K562 (cell line): ENCODE measurements at regions of chr19 and their contacts with region 1.

Region 1: DNA sequence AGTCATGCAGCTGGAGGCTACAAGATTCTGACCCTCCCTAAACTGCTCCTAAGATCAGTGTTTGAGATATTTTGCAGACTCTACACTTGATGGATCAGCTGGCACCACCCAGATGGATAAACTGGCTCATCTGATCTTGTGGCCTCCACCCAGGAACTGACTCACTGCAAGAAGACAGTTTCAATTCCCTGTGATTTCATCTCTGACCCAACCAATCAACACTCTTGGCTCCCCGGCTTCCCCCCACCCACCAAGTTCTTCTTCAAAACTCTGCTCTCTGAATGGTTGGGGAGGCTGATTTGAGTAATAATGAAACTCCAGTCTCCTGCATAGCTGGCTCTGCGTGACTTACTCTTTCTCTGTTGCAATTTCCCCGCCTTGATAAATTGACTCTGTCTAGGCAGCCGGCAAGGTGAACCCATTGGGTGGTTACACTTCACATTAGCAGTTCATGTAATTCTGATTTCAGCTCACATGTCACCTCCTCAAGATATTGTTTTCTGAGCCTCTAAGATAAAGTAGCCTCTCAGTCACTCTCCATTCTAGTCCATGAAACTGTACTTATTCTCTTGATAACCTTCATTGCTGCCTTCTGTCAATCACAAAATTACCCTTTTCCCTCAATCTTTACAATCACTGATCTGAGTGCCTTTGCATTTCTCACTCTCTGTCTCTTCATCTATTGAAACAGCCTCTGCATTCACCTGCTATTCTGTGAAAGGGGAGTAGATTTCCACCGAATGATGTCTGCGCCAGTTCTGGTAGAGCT is 9.9 kb upstream of the FPR3 start:
- DNase-seq: peak in 2 of 4 experiments; percentile 51 to 75
- ATAC-seq: peak; percentile 81
- H3K4me3 ChIP-seq: no peak overlapping the region
- H3K27ac ChIP-seq: peak overlapping the region; percentile 63; the same call in 2 of the 3 replicates
- H3K4me1 ChIP-seq: peaks cover 17 to 42% of the 10 kb centered on the region in 2 experiments
- H3K27me3 ChIP-seq: no peaks in the 10 kb centered on the region
- CTCF ChIP-seq: no peak
- EP300 ChIP-seq: peak; percentile 77
- POLR2A ChIP-seq: no peak
- RAD21 ChIP-seq: no peak

Region 2: GRCh38 chr19:51422053-51422448 is 363.1 kb before region 1 on chr19:
- CTCF ChIA-PET with region 1: no interaction called
- POLR2A ChIA-PET with region 1: no interaction called
- in situ Hi-C with region 1: loop called (anchors 10 kb)
- intact Hi-C with region 1: loop called (anchors 10 kb)
- DNase-seq: peak; percentile 90 to 95 (median 94)
- ATAC-seq: peak; percentile 95
- H3K4me3 ChIP-seq: no peak overlapping the region
- H3K27ac ChIP-seq: no peak overlapping the region
- H3K4me1 ChIP-seq: peaks cover 3 to 23% of the 10 kb centered on the region in 2 experiments
- H3K27me3 ChIP-seq: no peaks in the 10 kb centered on the region
- CTCF ChIP-seq: peak; percentile 96
- EP300 ChIP-seq: peak; percentile 18; the same call in 1 of the 2 replicates
- POLR2A ChIP-seq: no peak
- RAD21 ChIP-seq: peak; percentile 98 to 100

Region 3: DNA sequence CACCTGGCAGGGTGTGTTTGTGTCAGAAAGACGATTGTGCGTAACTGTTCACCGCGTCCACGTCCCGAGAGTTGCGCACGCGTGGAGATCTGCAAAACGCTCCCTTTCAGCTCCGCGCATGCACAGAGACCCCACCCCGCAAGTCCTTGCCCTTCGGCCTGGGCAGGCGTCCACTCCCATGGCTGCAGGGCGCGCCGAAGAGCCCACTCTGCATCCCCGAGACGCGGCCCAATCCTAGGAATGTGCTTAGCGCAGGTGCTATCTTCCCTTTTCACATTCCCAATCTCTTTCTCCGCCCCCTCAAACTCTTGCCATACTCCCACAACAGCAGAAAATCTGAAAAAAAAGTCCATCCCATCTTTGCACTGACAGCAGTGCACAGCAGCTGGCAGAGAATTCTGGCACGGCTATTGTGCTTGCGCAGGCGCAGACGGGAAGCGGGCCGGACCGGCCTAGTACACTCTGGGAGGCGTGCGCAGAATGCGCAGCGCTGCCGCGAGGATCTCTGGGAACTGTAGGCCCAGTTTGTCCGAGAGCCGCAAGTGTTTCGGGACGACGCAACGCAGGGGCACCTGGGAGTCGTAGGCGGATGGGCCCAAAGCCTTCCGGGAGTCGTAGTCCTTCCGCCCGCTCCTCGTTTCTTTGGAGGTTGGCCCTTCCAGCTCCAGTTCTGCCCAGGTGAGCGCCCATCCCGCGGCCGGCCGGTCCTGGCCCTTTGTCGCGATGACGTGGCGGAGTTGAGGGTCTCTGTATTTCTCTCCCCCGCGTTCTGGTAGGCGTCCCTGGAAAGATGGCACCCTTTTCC is 190.9 kb before region 1 on chr19:
- CTCF ChIA-PET with region 1: no interaction called
- POLR2A ChIA-PET with region 1: no interaction called
- in situ Hi-C with region 1: no loop called
- intact Hi-C with region 1: no loop called
- DNase-seq: peak; percentile 95 to 99 (median 97)
- ATAC-seq: peak; percentile 100
- H3K4me3 ChIP-seq: peak overlapping the region; percentile 48
- H3K27ac ChIP-seq: peak overlapping the region; percentile 53; the same call in 2 of the 3 replicates
- H3K4me1 ChIP-seq: peaks cover 23 to 36% of the 10 kb centered on the region in 2 experiments
- H3K27me3 ChIP-seq: no peaks in the 10 kb centered on the region
- CTCF ChIP-seq: no peak
- EP300 ChIP-seq: no peak
- POLR2A ChIP-seq: no peak
- RAD21 ChIP-seq: no peak

Region 4: DNA sequence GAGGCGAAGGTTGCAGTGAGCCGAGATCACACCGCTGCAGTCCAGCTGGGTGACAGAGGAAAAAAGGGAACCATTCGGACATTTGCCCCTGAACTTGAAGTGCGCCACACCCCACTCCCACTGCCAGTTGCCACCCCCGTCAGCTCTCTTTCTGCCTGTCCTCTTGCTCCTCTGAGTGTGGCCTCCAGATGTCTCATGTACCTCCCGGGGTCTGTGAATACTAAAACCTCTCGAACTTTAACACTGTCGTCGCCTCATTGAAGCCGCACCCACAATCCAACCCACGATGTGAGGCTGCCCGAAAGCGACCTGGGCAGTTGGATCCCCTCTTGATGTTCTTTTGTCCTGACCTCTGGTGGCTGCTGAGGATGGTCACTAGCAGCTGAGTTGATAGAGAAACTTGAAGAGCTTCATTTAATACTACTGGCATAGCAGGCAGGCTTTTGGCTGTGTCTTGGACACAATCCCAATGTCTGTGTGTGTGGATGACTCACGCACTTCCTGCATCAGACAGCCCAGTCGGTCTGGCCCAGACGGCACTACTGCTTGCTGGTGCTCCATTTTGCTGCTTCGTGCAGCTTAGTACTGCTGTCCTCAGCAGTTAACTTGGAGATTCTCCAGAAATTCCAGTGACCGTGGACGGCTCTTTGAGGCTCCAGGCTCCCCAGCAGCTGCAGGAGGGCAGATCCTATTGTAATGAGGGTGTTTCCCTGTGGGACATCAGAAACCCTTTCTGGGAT is 14.1 kb after region 1 on chr19:
- CTCF ChIA-PET with region 1: no interaction called
- POLR2A ChIA-PET with region 1: interaction called, 4 read pairs
- in situ Hi-C with region 1: no loop called
- intact Hi-C with region 1: loop called (anchors 2 kb)
- DNase-seq: peak; percentile 59 to 88 (median 66)
- ATAC-seq: peak; percentile 81
- H3K4me3 ChIP-seq: no peak overlapping the region
- H3K27ac ChIP-seq: peak overlapping the region; percentile 97
- H3K4me1 ChIP-seq: peaks cover 31 to 74% of the 10 kb centered on the region in 2 experiments
- H3K27me3 ChIP-seq: no peaks in the 10 kb centered on the region
- CTCF ChIP-seq: peak; percentile 19 to 39 (median 38); a peak in 4 of 6 replicates
- EP300 ChIP-seq: peak; percentile 62
- POLR2A ChIP-seq: peak; percentile 54; the same call in 1 of the 2 replicates
- RAD21 ChIP-seq: no peak; a peak in 2 of 4 replicates